Gastrocnemius medialis (tissue), 4 donors: ENCODE measurements at regions of chr1 and their contacts with region 1.

Region 1: DNA sequence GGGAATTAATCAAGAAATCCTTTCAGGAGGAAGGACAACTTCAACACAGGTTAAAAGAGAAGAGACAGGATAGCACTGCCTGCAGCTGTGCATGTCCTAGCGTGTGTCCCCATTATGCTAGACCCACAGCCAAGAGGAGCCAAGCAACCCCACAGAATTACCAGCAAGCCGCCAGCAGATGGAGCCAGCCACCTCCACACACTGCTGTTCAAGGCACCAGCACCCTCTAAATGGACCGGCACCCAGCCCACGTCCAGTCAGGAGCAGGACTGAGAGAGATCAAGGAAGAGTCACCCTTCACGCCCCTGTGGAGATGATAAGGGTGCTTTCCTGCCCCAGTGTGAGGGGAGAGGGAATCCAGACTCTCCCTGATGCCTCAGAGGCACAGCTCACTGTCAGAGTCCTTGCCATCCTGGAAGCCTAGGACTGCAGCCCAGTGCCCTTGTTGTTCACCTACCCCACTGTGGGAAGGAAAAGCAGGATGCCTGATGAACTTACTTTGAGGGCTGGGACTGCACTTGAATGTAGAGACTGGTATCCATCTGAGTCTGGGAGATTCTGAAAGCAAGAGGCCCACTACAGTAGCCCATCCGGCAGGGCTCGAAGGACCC is 37.1 kb upstream of the CTTNBP2NL start:
- DNase-seq: peak; percentile 37 to 66
- ATAC-seq: peak; percentile 70 to 74
- H3K4me3 ChIP-seq: peak overlapping the region in 2 of 4 donors; percentile 16 to 44
- H3K27ac ChIP-seq: peak overlapping the region; percentile 68 to 81 (median 74)
- H3K4me1 ChIP-seq: peaks cover 9 to 15% of the 10 kb centered on the region in 2 donors
- H3K27me3 ChIP-seq: no peaks in the 10 kb centered on the region
- CTCF ChIP-seq: peak; percentile 40 to 67 (median 59)
- POLR2A ChIP-seq: no peak

Region 2: GRCh38 chr1:112325504-112325903 is 33.4 kb before region 1 on chr1:
- in situ Hi-C with region 1: no loop called
- intact Hi-C with region 1: loop called (anchors 1 kb)
- DNase-seq: no peak
- ATAC-seq: peak in 1 of 2 donors; percentile 30
- H3K4me3 ChIP-seq: no peak overlapping the region
- H3K27ac ChIP-seq: no peak overlapping the region
- H3K4me1 ChIP-seq: no peaks in the 10 kb centered on the region
- H3K27me3 ChIP-seq: peaks cover 0 to 3% (median 0%) of the 10 kb centered on the region in 3 donors
- CTCF ChIP-seq: no peak
- POLR2A ChIP-seq: no peak

Region 3: DNA sequence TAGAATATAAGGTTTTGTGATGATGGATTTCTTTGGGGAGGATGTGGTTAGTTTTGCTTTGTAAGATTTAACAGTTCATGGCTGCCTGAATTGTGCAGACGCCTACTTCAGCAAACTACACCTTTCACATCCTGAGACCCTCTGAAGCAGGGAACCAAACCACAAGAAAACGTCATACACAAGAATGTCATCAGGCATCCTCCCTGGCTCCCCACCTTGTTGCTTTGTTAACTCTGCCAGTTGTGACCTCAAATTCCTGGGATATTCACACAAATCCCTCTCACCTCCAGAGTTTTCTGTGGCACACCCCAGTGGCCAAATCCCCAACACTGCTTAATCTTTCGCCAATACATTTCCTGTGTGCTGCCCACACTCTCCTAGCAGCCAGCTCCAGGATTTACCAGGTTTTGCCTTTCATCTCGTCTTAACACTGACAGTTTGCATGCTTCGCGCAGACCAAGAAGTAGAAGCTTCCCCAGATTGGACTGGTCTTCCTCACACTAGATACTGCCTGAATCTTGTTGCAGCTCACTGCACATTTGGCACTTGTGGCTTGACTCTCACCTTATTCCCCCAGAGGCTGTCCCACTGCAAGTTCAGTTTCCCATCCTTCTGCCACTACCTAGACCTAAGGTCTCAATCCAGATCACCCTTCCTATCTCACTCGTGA is 14.0 kb before region 1 on chr1:
- in situ Hi-C with region 1: no loop called
- intact Hi-C with region 1: no loop called
- DNase-seq: no peak
- ATAC-seq: no peak
- H3K4me3 ChIP-seq: no peak overlapping the region
- H3K27ac ChIP-seq: no peak overlapping the region
- H3K4me1 ChIP-seq: no peaks in the 10 kb centered on the region
- H3K27me3 ChIP-seq: no peaks in the 10 kb centered on the region
- CTCF ChIP-seq: no peak
- POLR2A ChIP-seq: no peak

Region 4: DNA sequence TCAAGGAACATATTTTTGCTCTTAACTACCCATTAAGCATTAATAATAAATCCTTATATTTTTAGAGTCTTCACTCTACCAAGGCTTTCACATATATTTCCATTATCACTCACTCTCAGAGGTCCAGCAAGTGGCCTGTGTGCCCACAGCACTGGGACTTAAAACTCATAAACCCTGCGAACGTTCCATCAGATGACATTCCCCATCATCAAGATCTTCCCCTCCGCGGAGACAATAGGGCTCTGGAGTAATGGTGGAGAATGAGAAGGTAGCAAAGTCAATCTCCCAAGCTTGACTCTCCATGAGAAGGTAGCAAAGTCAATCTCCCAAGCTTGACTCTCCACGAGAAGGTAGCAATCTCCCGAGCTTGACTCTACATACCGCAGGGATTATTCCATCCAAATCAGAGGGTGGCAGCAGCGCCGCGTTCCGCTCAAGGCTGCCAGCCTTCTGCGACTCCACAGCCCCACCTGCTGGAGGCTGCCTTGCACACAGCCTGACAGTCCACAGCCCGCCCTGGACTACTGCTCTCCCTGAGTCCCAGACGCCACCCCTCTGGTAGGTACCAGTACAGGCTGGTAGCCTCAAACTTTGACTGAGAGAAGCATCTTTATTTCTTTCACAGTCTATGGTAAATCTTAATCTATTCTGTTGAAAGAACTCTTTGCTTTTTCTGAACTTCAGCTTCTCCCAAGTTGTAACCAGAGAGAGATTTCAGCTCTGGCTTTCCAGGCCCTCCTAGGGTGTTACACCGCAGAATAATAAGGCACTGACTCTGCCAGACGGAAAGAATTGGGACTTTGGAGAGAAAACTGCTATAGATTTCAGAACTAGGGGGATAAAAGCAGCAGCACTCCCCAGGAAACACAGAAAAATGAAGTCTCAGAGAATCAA is 10.7 kb after region 1 on chr1:
- in situ Hi-C with region 1: no loop called
- intact Hi-C with region 1: loop called (anchors 1 kb)
- DNase-seq: peak; percentile 66 to 71
- ATAC-seq: peak; percentile 93 to 99
- H3K4me3 ChIP-seq: no peak overlapping the region
- H3K27ac ChIP-seq: no peak overlapping the region
- H3K4me1 ChIP-seq: no peaks in the 10 kb centered on the region
- H3K27me3 ChIP-seq: no peaks in the 10 kb centered on the region
- CTCF ChIP-seq: peak; percentile 77 to 94 (median 86)
- POLR2A ChIP-seq: no peak

Region 5: GRCh38 chr1:112472142-112472541 is 113.2 kb after region 1 on chr1:
- in situ Hi-C with region 1: no loop called
- intact Hi-C with region 1: no loop called
- DNase-seq: no peak
- ATAC-seq: no peak
- H3K4me3 ChIP-seq: no peak overlapping the region
- H3K27ac ChIP-seq: no peak overlapping the region
- H3K4me1 ChIP-seq: no peaks in the 10 kb centered on the region
- H3K27me3 ChIP-seq: no peaks in the 10 kb centered on the region
- CTCF ChIP-seq: no peak
- POLR2A ChIP-seq: no peak